Endothelial cell of umbilical vein (primary cell): ENCODE measurements at regions of chr1 and their contacts with region 1.

Region 1: GRCh38 chr1:38210895-38211177 is 164.2 kb upstream of the POU3F1 start:
- DNase-seq: no peak
- H3K4me3 ChIP-seq: no peak overlapping the region
- H3K27ac ChIP-seq: no peak overlapping the region
- H3K4me1 ChIP-seq: no peaks in the 10 kb centered on the region
- H3K27me3 ChIP-seq: no peaks in the 10 kb centered on the region
- CTCF ChIP-seq: no peak
- POLR2A ChIP-seq: no peak

Region 2: GRCh38 chr1:38243106-38243505 is 32.3 kb after region 1 on chr1:
- CTCF ChIA-PET with region 1: no interaction called
- POLR2A ChIA-PET with region 1: no interaction called
- dilution Hi-C with region 1: no loop called
- intact Hi-C with region 1: loop called (anchors 1 kb)
- DNase-seq: no peak
- H3K4me3 ChIP-seq: no peak overlapping the region
- H3K27ac ChIP-seq: no peak overlapping the region
- H3K4me1 ChIP-seq: peaks cover 10% of the 10 kb centered on the region
- H3K27me3 ChIP-seq: peaks cover 2 to 16% of the 10 kb centered on the region in 2 experiments
- CTCF ChIP-seq: no peak
- POLR2A ChIP-seq: no peak